Vagina (tissue), 2 donors: ENCODE measurements at regions of chr19 and their contacts with region 1.

Region 1: DNA sequence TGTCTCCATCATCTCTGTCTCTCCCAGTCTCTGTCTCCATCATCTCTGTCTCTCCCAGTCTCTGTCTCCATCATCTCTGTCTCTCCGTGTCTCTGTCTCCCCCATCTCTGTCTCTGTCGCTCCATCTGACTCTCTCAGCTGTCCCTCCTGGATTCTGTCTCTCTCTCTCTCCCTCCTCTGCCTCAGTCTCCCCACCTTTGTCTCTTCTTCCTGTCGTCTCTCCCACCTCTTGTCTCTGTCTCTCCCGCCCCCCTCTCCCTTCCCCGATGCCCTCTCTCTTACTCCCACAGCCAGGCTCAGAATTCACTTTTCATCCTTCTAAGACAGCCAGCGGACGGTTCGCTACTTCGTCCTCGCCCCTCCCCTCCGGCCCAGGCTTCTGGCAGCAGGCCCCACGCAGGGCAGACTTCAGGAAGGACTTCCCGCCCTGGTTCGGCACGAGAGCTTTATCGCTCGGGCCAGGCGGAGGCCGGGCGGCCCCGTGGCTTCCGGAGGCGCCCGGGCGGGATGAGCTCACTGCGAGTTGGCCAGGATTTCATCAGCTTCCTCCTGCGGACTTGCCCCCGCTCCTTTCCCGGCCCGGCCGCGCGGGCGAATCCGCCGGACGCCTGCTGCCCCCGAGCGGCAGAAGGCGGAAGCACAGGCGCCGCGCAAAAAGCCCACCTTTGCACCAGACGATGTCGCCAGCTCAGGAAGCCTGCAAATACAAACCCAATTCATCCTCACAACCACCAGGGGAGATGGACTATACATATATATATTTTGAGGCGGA is 12.4 kb upstream of the CCDC9 start:
- DNase-seq: peak in 1 of 2 donors; percentile 94
- H3K4me3 ChIP-seq: peak overlapping the region; percentile 34 to 45
- H3K27ac ChIP-seq: peak overlapping the region; percentile 72
- H3K4me1 ChIP-seq: peaks cover 52% of the 10 kb centered on the region
- H3K27me3 ChIP-seq: no peaks in the 10 kb centered on the region
- CTCF ChIP-seq: peak; percentile 96 to 99 (median 99)
- POLR2A ChIP-seq: peak in 1 of 2 donors; percentile 29

Region 2: DNA sequence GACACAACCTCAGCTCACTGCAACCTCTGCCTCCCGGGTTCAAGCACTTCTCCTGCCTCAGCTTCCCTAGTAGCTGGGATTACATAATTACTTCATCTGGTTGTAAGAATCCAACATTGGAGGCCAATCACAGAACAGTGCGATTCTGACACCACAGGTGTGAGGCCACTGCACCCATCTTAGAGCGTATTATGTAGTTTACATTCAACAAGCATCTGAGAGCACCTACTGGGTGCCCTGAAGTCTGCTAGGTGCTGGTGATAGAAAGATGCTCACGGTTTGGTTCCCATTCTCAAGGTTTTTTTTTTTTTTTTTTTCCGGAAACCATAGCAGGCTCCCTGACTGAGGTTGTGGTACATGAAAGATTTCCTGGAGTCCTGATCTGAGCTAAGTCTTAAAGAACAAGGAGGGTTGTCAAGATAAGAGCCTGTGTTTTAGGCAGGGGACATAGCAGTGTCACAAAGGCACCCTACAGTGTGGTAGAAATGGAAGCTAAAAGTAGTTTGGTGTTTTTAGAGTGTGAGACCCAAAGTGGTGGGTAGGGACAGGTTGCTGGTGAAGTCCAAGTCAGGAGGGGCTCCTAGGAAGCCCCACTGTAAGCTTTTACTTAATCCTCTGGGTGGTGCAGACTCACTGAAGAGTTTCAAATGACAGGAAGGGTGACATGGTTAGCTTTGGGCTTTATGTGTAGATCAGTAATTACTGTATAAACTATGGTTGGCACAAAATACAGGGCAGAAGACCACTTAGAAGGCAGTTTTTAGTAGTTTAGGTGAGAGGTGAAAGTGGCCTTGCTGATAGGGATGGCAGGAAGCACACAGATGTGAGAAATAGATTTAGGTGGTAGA is 98.1 kb before region 1 on chr19:
- intact Hi-C with region 1: loop called (anchors 5 kb)
- DNase-seq: no peak
- H3K4me3 ChIP-seq: no peak overlapping the region
- H3K27ac ChIP-seq: no peak overlapping the region
- H3K4me1 ChIP-seq: peaks cover 13% of the 10 kb centered on the region
- H3K27me3 ChIP-seq: no peaks in the 10 kb centered on the region
- CTCF ChIP-seq: no peak
- POLR2A ChIP-seq: no peak

Region 3: DNA sequence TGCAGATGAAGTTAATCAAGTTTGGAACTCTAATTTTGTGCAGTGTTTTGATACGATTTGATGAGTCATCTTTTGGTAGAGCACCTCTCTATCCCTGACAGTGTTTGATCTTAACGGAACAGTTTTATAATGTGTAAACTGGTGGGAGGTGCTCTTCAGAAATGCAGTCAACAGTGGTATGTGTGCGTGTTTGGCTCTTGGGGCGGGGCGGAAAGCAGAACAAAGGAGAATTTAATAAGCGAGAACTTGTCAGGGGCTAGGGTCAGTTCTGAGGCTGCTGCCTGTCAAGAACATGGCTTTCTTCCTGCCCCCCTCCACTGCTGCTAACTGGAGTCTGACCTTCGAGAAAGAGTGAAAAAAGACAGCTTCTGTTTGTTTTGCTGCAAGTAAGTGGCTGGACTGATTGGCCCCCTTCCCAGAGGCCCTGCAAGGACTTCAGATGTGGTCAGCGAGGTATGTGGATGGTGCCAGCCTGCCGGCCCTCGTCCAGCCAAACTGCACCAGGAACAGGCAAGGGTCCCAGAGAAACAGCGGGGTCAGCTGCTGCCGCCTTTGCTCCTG is 53.7 kb before region 1 on chr19:
- intact Hi-C with region 1: no loop called
- DNase-seq: no peak
- H3K4me3 ChIP-seq: peak overlapping the region in 1 of 2 donors; percentile 14
- H3K27ac ChIP-seq: peak overlapping the region; percentile 76
- H3K4me1 ChIP-seq: peaks cover 28% of the 10 kb centered on the region
- H3K27me3 ChIP-seq: no peaks in the 10 kb centered on the region
- CTCF ChIP-seq: no peak
- POLR2A ChIP-seq: no peak

Region 4: GRCh38 chr19:47209319-47210179 is 34.4 kb before region 1 on chr19:
- intact Hi-C with region 1: loop called (anchors 5 kb)
- DNase-seq: no peak
- H3K4me3 ChIP-seq: no peak overlapping the region
- H3K27ac ChIP-seq: peak overlapping the region; percentile 74
- H3K4me1 ChIP-seq: peaks cover 10% of the 10 kb centered on the region
- H3K27me3 ChIP-seq: no peaks in the 10 kb centered on the region
- CTCF ChIP-seq: no peak
- POLR2A ChIP-seq: no peak

Region 5: GRCh38 chr19:48203732-48204628 is 960.0 kb after region 1 on chr19:
- intact Hi-C with region 1: no loop called
- DNase-seq: peak in 1 of 2 donors; percentile 92
- H3K4me3 ChIP-seq: peak overlapping the region; percentile 75 to 78
- H3K27ac ChIP-seq: peak overlapping the region; percentile 68
- H3K4me1 ChIP-seq: peaks cover 15% of the 10 kb centered on the region
- H3K27me3 ChIP-seq: no peaks in the 10 kb centered on the region
- CTCF ChIP-seq: no peak
- POLR2A ChIP-seq: peak in 1 of 2 donors; percentile 24